Mammary epithelial cell (primary cell): ENCODE measurements at regions of chr16 and their contacts with region 1.

Region 1: DNA sequence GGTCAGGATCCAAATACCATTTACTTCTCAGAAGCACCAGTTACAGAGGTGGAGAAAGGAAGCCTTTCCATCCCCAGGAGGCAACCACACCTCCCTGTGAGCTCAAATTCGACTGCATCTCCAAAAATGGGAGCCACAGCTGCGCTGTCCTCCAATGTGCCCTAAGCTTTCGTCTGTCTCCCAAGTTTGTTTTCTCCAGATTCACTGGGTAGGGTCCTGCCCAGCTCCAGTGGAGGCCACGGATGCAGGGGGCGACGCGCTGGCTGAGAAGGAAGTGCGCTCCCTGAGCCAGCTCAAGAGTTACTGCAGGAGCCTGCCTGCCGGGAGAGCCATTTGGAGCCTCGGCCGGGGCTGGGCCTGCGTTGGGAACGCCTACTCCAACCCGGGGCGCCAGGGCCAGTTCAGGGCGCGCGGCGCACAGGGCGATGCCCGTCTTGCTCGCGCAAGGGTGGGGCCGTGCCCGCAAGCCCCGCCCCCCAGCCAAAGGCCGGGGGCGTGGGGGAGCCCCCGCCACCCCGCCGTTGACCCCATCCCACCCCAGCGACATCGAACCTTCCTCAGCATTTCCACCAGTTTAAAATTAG is 19.5 kb downstream of the SIAH1 start:
- DNase-seq: peak; percentile 91
- H3K4me3 ChIP-seq: peak overlapping the region; percentile 51 to 62 (median 61)
- H3K27ac ChIP-seq: peak overlapping the region; percentile 99
- H3K4me1 ChIP-seq: peaks cover 34% of the 10 kb centered on the region
- H3K27me3 ChIP-seq: no peaks in the 10 kb centered on the region
- CTCF ChIP-seq: peak in 1 of 2 donors; percentile 22

Region 2: DNA sequence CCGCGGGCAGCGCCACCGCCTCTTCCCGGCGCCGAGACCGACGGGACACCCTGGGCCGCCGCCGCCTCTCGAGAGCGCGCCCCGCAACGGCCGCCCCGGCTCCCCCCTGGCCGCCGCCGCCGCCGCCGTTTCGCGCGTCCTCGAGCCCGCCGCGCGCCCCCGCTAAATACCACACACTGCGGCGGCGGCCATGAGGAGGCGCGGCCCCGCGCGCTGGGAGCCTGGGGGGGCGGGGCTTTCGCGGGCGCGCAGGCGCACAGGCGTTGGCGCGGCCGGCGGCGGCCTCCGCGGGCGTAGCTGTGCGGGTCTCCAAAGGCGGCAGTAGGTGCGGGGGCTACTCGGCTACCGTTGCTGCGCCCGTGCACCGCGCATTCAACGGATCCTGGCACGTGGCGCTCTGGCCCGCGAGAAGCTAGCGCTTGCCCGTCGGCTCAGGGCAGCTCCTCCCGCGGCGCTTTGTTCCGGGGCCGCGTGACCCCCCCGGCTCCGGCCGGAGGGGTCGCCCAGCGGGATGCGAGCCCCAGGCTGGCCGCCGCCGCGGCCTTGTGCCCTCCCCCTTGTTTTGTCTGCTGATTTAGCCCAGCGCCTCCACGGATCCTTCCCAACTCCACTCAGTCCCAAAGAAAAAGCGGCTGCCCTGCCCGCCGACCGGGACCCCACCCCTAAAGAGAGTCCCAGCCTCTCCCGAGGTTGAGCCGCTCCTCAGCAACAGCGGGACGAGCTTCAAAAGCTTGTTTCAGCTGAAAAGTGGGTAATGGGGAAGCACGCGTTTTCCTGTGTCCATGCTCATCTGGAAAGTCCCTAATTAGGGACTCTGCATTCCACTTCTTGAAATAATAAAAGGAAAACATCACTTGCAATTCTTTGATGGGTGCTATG is 19.8 kb after region 1 on chr16 and contains the start of gene SIAH1:
- CTCF ChIA-PET with region 1: no interaction called
- dilution Hi-C with region 1: no loop called
- in situ Hi-C with region 1: no loop called
- intact Hi-C with region 1: loop called (anchors 1 kb)
- DNase-seq: peak; percentile 77
- H3K4me3 ChIP-seq: peak within 1 kb of the TSS; percentile 90 to 95 (median 92)
- H3K27ac ChIP-seq: peak within 1 kb of the TSS; percentile 88
- H3K4me1 ChIP-seq: peaks cover 3% of the 10 kb centered on the region
- H3K27me3 ChIP-seq: no peaks in the 10 kb centered on the region
- CTCF ChIP-seq: no peak
- total RNA-seq, gene SIAH1: 22.3 to 46.0 TPM

Region 3: GRCh38 chr16:48462201-48462600 is 96.5 kb after region 1 on chr16:
- CTCF ChIA-PET with region 1: no interaction called
- dilution Hi-C with region 1: no loop called
- in situ Hi-C with region 1: no loop called
- intact Hi-C with region 1: loop called (anchors 2 kb)
- DNase-seq: peak; percentile 95
- H3K4me3 ChIP-seq: no peak overlapping the region
- H3K27ac ChIP-seq: peak overlapping the region; percentile 5
- H3K4me1 ChIP-seq: peaks cover 12% of the 10 kb centered on the region
- H3K27me3 ChIP-seq: no peaks in the 10 kb centered on the region
- CTCF ChIP-seq: no peak

Region 4: GRCh38 chr16:48511071-48511540 is 145.4 kb after region 1 on chr16:
- CTCF ChIA-PET with region 1: no interaction called
- dilution Hi-C with region 1: no loop called
- in situ Hi-C with region 1: no loop called
- intact Hi-C with region 1: loop called (anchors 5 kb)
- DNase-seq: peak; percentile 96
- H3K4me3 ChIP-seq: no peak overlapping the region
- H3K27ac ChIP-seq: peak overlapping the region; percentile 98
- H3K4me1 ChIP-seq: peaks cover 20% of the 10 kb centered on the region
- H3K27me3 ChIP-seq: no peaks in the 10 kb centered on the region
- CTCF ChIP-seq: peak; percentile 10 to 46

Region 5: GRCh38 chr16:48526058-48526957 is 160.6 kb after region 1 on chr16:
- CTCF ChIA-PET with region 1: interaction called, 4 read pairs
- dilution Hi-C with region 1: no loop called
- in situ Hi-C with region 1: no loop called
- intact Hi-C with region 1: loop called (anchors 1 kb)
- DNase-seq: peak; percentile 75
- H3K4me3 ChIP-seq: no peak overlapping the region
- H3K27ac ChIP-seq: peak overlapping the region; percentile 9
- H3K4me1 ChIP-seq: peaks cover 5% of the 10 kb centered on the region
- H3K27me3 ChIP-seq: no peaks in the 10 kb centered on the region
- CTCF ChIP-seq: peak; percentile 54 to 81

Region 6: GRCh38 chr16:48542020-48542473 is 176.4 kb after region 1 on chr16:
- CTCF ChIA-PET with region 1: no interaction called
- dilution Hi-C with region 1: no loop called
- in situ Hi-C with region 1: no loop called
- intact Hi-C with region 1: loop called (anchors 5 kb)
- DNase-seq: peak; percentile 46
- H3K4me3 ChIP-seq: no peak overlapping the region
- H3K27ac ChIP-seq: no peak overlapping the region
- H3K4me1 ChIP-seq: peaks cover 15% of the 10 kb centered on the region
- H3K27me3 ChIP-seq: no peaks in the 10 kb centered on the region
- CTCF ChIP-seq: peak; percentile 57 to 71